Left lung (tissue), 14 donors: ENCODE measurements at regions of chr3 and their contacts with region 1.

Region 1: GRCh38 chr3:196528639-196529233 is 13.6 kb upstream of the SMCO1 start:
- DNase-seq: peak; percentile 8 to 99 (median 80)
- ATAC-seq: peak; percentile 100
- H3K4me3 ChIP-seq: peak overlapping the region; percentile 32 to 43
- H3K27ac ChIP-seq: peak overlapping the region; percentile 7 to 38
- H3K4me1 ChIP-seq: peaks cover 0 to 4% of the 10 kb centered on the region in 2 donors
- H3K27me3 ChIP-seq: peaks cover 0 to 16% of the 10 kb centered on the region in 2 donors
- CTCF ChIP-seq: peak; percentile 85 to 95

Region 2: GRCh38 chr3:196251918-196252317 is 276.8 kb before region 1 on chr3:
- intact Hi-C with region 1: loop called in 1 of 2 experiments (anchors 10 kb)
- DNase-seq: no peak
- ATAC-seq: no peak
- H3K4me3 ChIP-seq: no peak overlapping the region
- H3K27ac ChIP-seq: no peak overlapping the region
- H3K4me1 ChIP-seq: peaks cover 0 to 5% of the 10 kb centered on the region in 2 donors
- H3K27me3 ChIP-seq: no peaks in the 10 kb centered on the region
- CTCF ChIP-seq: no peak